Activated T-helper 2 cell treated with anti-CD3 and anti-CD28 coated beads, Interferon-gamma antibody, Interleukin-2, Interleukin-4, amounts not matched to agents 10 μg/mL and 5 μg/mL and 100 μg/mL, durations not matched to agents 14 hours and 24 hours and 36 hours (primary cell): ENCODE measurements at regions of chr17 and their contacts with region 1.

Region 1: GRCh38 chr17:5198472-5198871 is 6.8 kb upstream of the ZNF594 start:
- DNase-seq: no peak
- H3K4me3 Mint-ChIP-seq: no peak overlapping the region
- H3K27ac Mint-ChIP-seq: no peak overlapping the region
- H3K4me1 Mint-ChIP-seq: no peaks in the 10 kb centered on the region
- H3K27me3 Mint-ChIP-seq: no peaks in the 10 kb centered on the region

Region 2: GRCh38 chr17:5281814-5282653 is 83.6 kb after region 1 on chr17 and contains the start of gene RABEP1:
- intact Hi-C with region 1: loop called (anchors 5 kb)
- DNase-seq: peak; percentile 92
- H3K4me3 Mint-ChIP-seq: peak within 1 kb of the TSS; percentile 87
- H3K27ac Mint-ChIP-seq: peak within 1 kb of the TSS; percentile 84
- H3K4me1 Mint-ChIP-seq: peaks cover 24% of the 10 kb centered on the region
- H3K27me3 Mint-ChIP-seq: no peaks in the 10 kb centered on the region
- total RNA-seq, gene RABEP1: 45.8 and 53.2 TPM in 2 replicates

Region 3: DNA sequence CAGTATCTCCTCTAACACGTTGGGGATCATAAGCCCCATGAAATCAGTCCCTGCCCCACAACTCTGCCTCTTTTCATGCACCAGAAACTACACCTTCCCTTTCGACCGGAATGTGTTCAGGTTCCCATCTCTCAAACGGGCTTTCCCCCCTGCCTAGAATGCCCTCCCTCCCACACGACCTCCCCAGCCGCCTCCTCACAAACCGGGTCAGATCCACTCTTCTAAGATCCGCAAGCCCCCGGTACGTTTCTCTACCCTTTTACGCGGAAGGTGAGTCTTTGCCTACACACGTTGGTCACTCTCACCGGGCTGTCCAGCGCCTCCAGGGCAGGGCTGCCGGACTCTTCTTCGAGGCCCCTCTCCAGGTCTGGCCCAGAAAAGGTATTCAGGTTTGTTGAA is 269.6 kb after region 1 on chr17:
- intact Hi-C with region 1: no loop called
- DNase-seq: no peak
- H3K4me3 Mint-ChIP-seq: peak overlapping the region; percentile 95
- H3K27ac Mint-ChIP-seq: peak overlapping the region; percentile 44
- H3K4me1 Mint-ChIP-seq: peaks cover 39% of the 10 kb centered on the region
- H3K27me3 Mint-ChIP-seq: no peaks in the 10 kb centered on the region